BJ (cell line): ENCODE measurements at regions of chrX and their contacts with region 1.

Region 1: GRCh38 chrX:102768987-102769761 is 48.6 kb downstream of the GPRASP3 start:
- DNase-seq: peak; percentile 49
- H3K4me3 ChIP-seq: peak overlapping the region; percentile 56
- H3K27me3 ChIP-seq: no peaks in the 10 kb centered on the region
- CTCF ChIP-seq: no peak

Region 2: DNA sequence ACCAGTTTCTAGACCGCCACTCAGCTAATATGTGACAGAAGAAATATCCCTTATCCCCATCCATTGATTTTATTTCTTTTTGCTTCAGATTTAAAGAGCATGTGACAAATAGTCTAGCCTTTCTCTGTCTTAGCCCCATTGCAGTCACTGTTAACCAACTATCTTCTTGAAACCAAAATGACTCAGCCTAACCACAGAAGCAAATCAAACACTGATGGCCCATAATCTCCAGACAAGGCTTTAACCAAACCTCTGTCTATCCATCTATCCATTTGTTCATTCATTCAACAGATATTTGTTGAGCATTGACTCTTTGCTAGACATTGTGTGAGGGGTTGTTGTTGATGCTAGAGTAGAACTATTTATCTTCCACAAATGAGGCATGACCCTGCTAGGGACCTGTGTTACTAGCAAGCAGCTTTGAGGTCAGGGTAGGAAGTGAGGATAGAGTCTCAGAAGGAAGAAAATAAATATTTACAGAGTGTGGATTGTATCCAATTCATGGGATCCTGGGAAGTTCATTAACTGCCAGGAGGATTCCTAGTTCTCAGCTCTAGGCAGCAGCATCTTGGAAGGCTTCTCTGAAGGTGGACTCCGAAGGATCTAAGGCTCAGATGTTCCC is 1338.6 kb before region 1 on chrX:
- CTCF ChIA-PET with region 1: no interaction called
- POLR2A ChIA-PET with region 1: interaction called, 11 read pairs
- DNase-seq: no peak
- H3K4me3 ChIP-seq: no peak overlapping the region
- H3K27me3 ChIP-seq: no peaks in the 10 kb centered on the region
- CTCF ChIP-seq: no peak

Region 3: GRCh38 chrX:102643275-102643674 is 125.9 kb before region 1 on chrX:
- CTCF ChIA-PET with region 1: no interaction called
- POLR2A ChIA-PET with region 1: no interaction called
- DNase-seq: no peak
- H3K4me3 ChIP-seq: no peak overlapping the region
- H3K27me3 ChIP-seq: no peaks in the 10 kb centered on the region
- CTCF ChIP-seq: no peak